PC-9 (cell line): ENCODE measurements at regions of chr12 and their contacts with region 1.

Region 1: GRCh38 chr12:76284816-76285750 is 63.1 kb downstream of the BBS10 start:
- DNase-seq: peak in 1 of 2 experiments; percentile 24
- H3K4me3 ChIP-seq: no peak overlapping the region
- H3K27ac ChIP-seq: no peak overlapping the region
- H3K4me1 ChIP-seq: no peaks in the 10 kb centered on the region; the same call in 1 of the 2 replicates
- H3K27me3 ChIP-seq: no peaks in the 10 kb centered on the region
- CTCF ChIP-seq: no peak

Region 2: GRCh38 chr12:76176940-76177339 is 108.1 kb before region 1 on chr12:
- CTCF ChIA-PET with region 1: no interaction called
- POLR2A ChIA-PET with region 1: no interaction called
- intact Hi-C with region 1: loop called (anchors 10 kb)
- DNase-seq: no peak
- H3K4me3 ChIP-seq: no peak overlapping the region
- H3K27ac ChIP-seq: no peak overlapping the region
- H3K4me1 ChIP-seq: no peaks in the 10 kb centered on the region
- H3K27me3 ChIP-seq: no peaks in the 10 kb centered on the region
- CTCF ChIP-seq: no peak